Right ventricle myocardium superior (tissue), 1 donor: ENCODE measurements at regions of chr13 and their contacts with region 1.

Region 1: GRCh38 chr13:92187378-92187989 is 789.1 kb downstream of the GPC5 start:
- DNase-seq: no peak
- ATAC-seq: peak; percentile 65

Region 2: DNA sequence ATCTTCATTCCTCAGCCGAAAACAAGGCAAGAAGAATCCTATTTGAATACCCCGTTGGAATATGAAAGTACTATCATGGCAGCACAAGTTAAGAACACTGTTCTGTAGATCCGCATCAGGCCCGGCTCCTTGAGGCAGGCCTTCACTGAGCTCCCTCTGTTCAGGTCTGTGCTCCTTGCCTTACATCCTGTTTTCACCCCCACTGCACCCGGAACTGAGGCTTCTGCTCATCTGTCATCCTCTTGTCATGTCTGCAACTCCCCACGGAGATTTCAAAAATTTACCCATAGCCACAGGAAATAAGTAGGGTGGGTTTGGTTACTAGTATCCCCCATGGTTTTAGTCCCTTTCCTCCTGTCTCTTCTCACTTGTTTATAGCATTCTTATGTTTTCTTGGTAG is 72.9 kb after region 1 on chr13:
- intact Hi-C with region 1: no loop called
- DNase-seq: no peak
- ATAC-seq: no peak

Region 3: GRCh38 chr13:92355213-92355612 is 167.7 kb after region 1 on chr13:
- intact Hi-C with region 1: loop called (anchors 5 kb)
- DNase-seq: no peak
- ATAC-seq: peak; percentile 29